ENCODE measurements at regions of chr11 and their contacts with region 1.

Region 1: GRCh38 chr11:87405843-87406242 is 368.1 kb downstream of the TMEM135 start:
- DNase-seq: no peak
- H3K4me3 ChIP-seq: no peak overlapping the region
- H3K27ac ChIP-seq: no peak overlapping the region
- H3K27me3 ChIP-seq: peaks cover 3% of the 10 kb centered on the region
- CTCF ChIP-seq: no peak

Region 2: GRCh38 chr11:87391496-87391895 is 14.3 kb before region 1 on chr11:
- CTCF ChIA-PET with region 1: no interaction called
- POLR2A ChIA-PET with region 1: no interaction called
- DNase-seq: no peak
- H3K4me3 ChIP-seq: no peak overlapping the region
- H3K27ac ChIP-seq: no peak overlapping the region
- H3K27me3 ChIP-seq: no peaks in the 10 kb centered on the region
- CTCF ChIP-seq: no peak

Region 3: GRCh38 chr11:87428266-87428665 is 22.4 kb after region 1 on chr11:
- CTCF ChIA-PET with region 1: no interaction called
- POLR2A ChIA-PET with region 1: no interaction called
- DNase-seq: no peak
- H3K4me3 ChIP-seq: no peak overlapping the region
- H3K27ac ChIP-seq: no peak overlapping the region
- H3K27me3 ChIP-seq: no peaks in the 10 kb centered on the region
- CTCF ChIP-seq: no peak

Region 4: DNA sequence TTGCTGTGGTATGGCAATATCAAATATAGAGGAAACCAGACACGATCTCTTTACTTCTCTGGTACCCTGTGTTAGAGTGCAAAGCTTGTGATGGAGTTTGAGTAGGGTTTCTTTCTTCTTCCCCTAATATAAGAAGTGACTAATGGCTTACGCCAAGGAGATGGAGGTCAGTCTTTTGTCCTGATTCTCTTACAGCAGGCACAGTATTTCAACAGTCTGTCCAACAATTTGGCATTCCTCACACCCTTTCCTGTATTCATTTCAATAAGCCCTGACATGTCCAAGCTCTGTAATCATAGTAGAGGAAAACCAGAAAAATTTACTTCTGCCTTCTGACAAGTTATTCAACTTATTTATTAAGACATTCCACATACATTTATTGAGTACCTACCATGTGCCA is 178.1 kb after region 1 on chr11:
- CTCF ChIA-PET with region 1: interaction called, 12 read pairs
- POLR2A ChIA-PET with region 1: no interaction called
- DNase-seq: no peak
- H3K4me3 ChIP-seq: no peak overlapping the region
- H3K27ac ChIP-seq: no peak overlapping the region
- H3K27me3 ChIP-seq: no peaks in the 10 kb centered on the region
- CTCF ChIP-seq: no peak